ENCODE measurements at regions of chr6 and their contacts with region 1.

Region 1: GRCh38 chr6:11700118-11700718 is 78.4 kb downstream of the ADTRP start:
- DNase-seq: peak; percentile 50 to 75 (median 57)
- ATAC-seq: peak; percentile 66
- H3K4me3 ChIP-seq: no peak overlapping the region
- H3K27ac ChIP-seq: no peak overlapping the region
- H3K4me1 ChIP-seq: no peaks in the 10 kb centered on the region; a peak in 2 of 5 replicates
- H3K27me3 ChIP-seq: no peaks in the 10 kb centered on the region
- CTCF ChIP-seq: peak; percentile 31 to 68 (median 47); a peak in 3 of 6 replicates
- EP300 ChIP-seq: no peak
- POLR2A ChIP-seq: no peak
- RAD21 ChIP-seq: peak; percentile 66 to 83

Region 2: GRCh38 chr6:11653028-11653583 is 47.1 kb before region 1 on chr6:
- CTCF ChIA-PET with region 1: no interaction called
- POLR2A ChIA-PET with region 1: no interaction called
- in situ Hi-C with region 1: no loop called
- intact Hi-C with region 1: no loop called
- DNase-seq: peak in 3 of 4 experiments; percentile 24 to 33 (median 30)
- ATAC-seq: no peak; the same call in 2 of the 3 replicates
- H3K4me3 ChIP-seq: no peak overlapping the region
- H3K27ac ChIP-seq: no peak overlapping the region
- H3K4me1 ChIP-seq: no peaks in the 10 kb centered on the region
- H3K27me3 ChIP-seq: peaks cover 25 to 48% of the 10 kb centered on the region in 2 experiments
- CTCF ChIP-seq: no peak
- EP300 ChIP-seq: no peak
- POLR2A ChIP-seq: no peak
- RAD21 ChIP-seq: no peak

Region 3: DNA sequence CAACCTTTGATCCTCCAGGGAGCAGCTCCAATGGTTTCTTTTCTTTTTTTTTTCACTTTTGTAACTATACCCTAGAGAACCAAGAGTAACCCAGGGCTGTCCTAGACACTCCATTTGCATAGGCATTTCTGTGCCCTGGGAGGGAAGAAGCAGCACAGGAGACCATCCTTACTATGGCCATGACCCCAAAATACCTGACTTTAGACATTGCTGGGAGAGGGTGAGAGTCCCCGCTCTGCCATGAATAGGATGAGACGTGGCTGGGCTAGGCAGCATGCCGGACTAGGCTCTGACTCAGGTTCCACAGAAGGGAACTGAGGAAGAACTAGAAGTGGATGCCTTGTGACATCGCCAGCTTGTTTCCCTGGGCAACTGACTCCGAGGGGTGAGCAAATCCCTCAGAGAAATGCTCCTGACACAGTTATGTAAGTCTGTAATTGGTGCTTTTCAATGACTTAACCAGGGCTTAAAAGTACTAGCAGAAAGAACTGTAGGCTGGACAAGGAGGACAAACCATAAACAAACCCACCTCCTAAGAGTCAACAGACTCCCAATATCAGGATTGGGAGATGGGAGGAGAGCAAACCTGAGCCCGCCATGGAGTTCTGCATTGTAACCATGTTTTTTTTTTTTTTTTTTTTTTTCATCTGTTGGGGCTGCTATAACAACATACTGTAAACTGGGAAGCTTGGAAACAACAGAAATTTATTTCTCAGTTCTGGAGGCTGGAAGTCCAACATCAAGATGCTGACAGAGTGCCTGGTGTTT is 79.3 kb after region 1 on chr6:
- CTCF ChIA-PET with region 1: no interaction called
- POLR2A ChIA-PET with region 1: no interaction called
- in situ Hi-C with region 1: no loop called
- intact Hi-C with region 1: loop called (anchors 5 kb)
- DNase-seq: no peak
- ATAC-seq: peak; percentile 38
- H3K4me3 ChIP-seq: no peak overlapping the region
- H3K27ac ChIP-seq: peak overlapping the region; percentile 72; the same call in 1 of the 3 replicates
- H3K4me1 ChIP-seq: peaks cover 7 to 28% of the 10 kb centered on the region in 2 experiments
- H3K27me3 ChIP-seq: no peaks in the 10 kb centered on the region
- CTCF ChIP-seq: no peak
- EP300 ChIP-seq: no peak
- POLR2A ChIP-seq: no peak
- RAD21 ChIP-seq: no peak

Region 4: GRCh38 chr6:11810039-11810541 is 109.9 kb after region 1 on chr6:
- CTCF ChIA-PET with region 1: no interaction called
- POLR2A ChIA-PET with region 1: no interaction called
- in situ Hi-C with region 1: no loop called
- intact Hi-C with region 1: loop called (anchors 5 kb)
- DNase-seq: peak; percentile 31 to 80 (median 52)
- ATAC-seq: peak; percentile 75
- H3K4me3 ChIP-seq: no peak overlapping the region
- H3K27ac ChIP-seq: no peak overlapping the region
- H3K4me1 ChIP-seq: peaks cover 5 to 14% of the 10 kb centered on the region in 2 experiments; a peak in 3 of 5 replicates
- H3K27me3 ChIP-seq: no peaks in the 10 kb centered on the region
- CTCF ChIP-seq: no peak
- EP300 ChIP-seq: no peak
- POLR2A ChIP-seq: no peak
- RAD21 ChIP-seq: no peak

Region 5: GRCh38 chr6:11921017-11921438 is 220.8 kb after region 1 on chr6:
- CTCF ChIA-PET with region 1: no interaction called
- POLR2A ChIA-PET with region 1: no interaction called
- in situ Hi-C with region 1: no loop called
- intact Hi-C with region 1: loop called (anchors 5 kb)
- DNase-seq: peak; percentile 50 to 94 (median 74)
- ATAC-seq: peak; percentile 93
- H3K4me3 ChIP-seq: no peak overlapping the region
- H3K27ac ChIP-seq: peak overlapping the region; percentile 68
- H3K4me1 ChIP-seq: peaks cover 31 to 54% of the 10 kb centered on the region in 2 experiments
- H3K27me3 ChIP-seq: no peaks in the 10 kb centered on the region
- CTCF ChIP-seq: no peak
- EP300 ChIP-seq: no peak; the same call in 1 of the 2 replicates
- POLR2A ChIP-seq: peak; percentile 64
- RAD21 ChIP-seq: no peak; a peak in 1 of 4 replicates

Region 6: DNA sequence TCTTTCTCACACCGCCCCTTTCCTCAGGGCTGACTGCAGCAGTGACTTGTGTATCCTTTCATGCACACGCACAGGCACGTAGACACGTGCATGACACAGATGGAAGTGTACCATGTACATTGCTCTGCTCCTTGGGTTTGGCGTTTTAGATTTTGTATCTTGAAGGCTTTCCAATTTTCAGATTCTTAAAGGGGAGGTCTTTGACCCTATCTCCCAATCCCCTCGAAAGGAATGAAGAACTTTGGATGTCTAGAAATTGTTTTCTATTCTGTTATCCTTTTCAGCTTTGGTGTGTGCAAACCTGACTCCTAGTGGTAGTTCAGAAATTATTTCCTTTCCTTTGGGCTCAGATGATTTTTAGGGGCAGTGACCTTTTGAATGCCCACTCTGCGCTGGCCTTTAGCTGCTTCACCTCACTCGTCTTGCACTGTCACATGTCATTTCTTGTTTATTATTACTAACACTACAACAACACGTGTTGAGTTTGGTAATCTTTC is 374.9 kb after region 1 on chr6:
- CTCF ChIA-PET with region 1: interaction called, 3 read pairs
- POLR2A ChIA-PET with region 1: no interaction called
- in situ Hi-C with region 1: no loop called
- intact Hi-C with region 1: loop called (anchors 2 kb)
- DNase-seq: peak in 2 of 4 experiments; percentile 40 to 47
- ATAC-seq: peak; percentile 74
- H3K4me3 ChIP-seq: no peak overlapping the region
- H3K27ac ChIP-seq: no peak overlapping the region
- H3K4me1 ChIP-seq: peaks cover 0 to 14% of the 10 kb centered on the region in 2 experiments; a peak in 3 of 5 replicates
- H3K27me3 ChIP-seq: no peaks in the 10 kb centered on the region
- CTCF ChIP-seq: peak; percentile 51 to 72 (median 57); a peak in 5 of 6 replicates
- EP300 ChIP-seq: no peak
- POLR2A ChIP-seq: no peak
- RAD21 ChIP-seq: peak; percentile 73 to 80

Region 7: DNA sequence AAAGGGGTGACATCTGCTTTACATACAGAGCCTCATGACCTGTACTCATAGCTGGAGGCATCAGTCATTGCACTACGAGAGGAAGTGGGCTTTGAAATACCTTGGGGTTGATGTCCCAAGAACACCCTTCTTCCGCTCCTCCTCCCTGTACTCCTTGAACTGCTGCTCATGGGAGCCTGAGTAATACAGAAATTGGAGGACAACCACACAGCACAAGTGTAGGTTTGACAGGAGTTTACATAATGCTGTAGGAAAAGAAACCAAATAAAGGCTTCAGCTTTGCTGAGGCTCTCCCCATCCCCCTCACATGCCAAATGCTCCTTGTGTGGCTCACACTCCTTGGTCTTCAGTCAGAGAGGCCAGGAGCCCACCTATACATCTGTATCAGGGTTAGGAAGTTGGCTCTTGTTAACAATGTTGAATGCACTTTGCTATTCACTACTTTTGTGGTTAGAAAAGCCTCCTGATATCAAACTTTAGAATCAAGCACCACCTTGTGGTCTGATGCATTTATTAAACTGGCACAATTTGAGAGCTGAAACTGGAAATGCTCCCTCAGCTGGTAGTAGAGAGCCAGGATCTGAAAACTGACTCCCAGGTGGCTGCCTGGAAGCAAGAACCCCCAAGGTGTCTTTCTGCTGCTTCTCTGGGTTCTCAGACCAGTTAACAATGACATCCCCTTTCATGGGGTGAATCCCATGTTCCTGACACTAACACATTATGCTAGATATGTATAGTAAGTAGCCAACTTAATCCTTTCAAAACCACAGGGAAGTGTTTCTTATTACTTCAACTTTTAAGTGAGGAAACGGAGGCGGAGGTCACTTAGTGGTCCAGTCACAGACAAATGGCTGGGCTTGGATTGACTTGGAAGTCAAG is 533.7 kb after region 1 on chr6:
- CTCF ChIA-PET with region 1: no interaction called
- POLR2A ChIA-PET with region 1: no interaction called
- in situ Hi-C with region 1: no loop called
- intact Hi-C with region 1: loop called (anchors 5 kb)
- DNase-seq: peak in 3 of 4 experiments; percentile 18 to 54 (median 23)
- ATAC-seq: peak; percentile 84
- H3K4me3 ChIP-seq: no peak overlapping the region
- H3K27ac ChIP-seq: no peak overlapping the region
- H3K4me1 ChIP-seq: no peaks in the 10 kb centered on the region
- H3K27me3 ChIP-seq: peaks cover 2 to 5% of the 10 kb centered on the region in 2 experiments
- CTCF ChIP-seq: peak; percentile 63 to 96 (median 96)
- EP300 ChIP-seq: no peak
- POLR2A ChIP-seq: no peak
- RAD21 ChIP-seq: peak; percentile 76 to 83